Heart right ventricle (tissue), 16 donors: ENCODE measurements at regions of chr1 and their contacts with region 1.

Region 1: DNA sequence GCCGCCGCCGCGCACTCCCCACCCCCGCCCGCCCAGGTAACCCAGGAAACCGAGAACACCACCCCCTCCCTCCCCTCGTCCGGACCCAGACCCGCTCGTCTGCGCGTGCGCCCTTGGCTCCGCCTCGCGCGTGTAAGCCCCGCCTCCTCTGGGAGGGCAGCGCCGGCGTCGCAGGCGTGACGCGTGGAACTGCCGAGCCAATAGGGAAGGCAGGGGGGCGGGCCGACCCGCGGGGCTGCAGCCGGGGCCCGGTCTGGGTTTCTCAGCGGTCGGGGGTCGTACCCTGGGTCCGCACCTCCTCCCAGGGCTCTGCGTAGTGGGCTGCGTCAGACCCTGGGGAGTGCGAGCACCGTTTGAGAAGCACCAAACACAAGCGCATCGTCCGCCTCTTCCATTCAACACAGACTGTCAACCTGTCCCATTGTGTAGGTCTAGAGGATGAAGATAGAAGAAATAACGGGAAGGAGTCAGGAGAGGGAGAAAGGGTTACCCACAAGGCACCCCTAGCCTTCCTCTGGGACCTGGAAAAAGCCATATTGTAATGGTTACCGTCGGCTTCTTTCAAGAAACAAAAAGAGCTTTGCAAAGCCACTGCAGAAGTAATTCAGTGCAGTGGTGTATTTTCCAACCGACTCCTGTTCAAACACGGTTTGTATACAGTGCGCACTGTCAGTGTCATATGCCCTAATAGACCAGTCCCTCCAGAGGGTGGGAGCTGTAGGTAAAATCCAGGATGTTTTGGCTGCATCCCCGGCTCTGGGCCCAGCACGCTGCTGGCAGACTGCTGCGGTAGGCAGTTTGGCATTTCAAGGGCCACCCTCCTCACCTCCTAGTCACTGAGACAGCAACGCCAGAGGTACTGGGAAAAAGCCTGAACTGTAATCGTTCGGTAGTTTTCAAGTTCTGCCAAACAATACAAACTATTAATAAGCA is 473 bp upstream of the LYST start:
- DNase-seq: peak; percentile 94 to 97
- ATAC-seq: peak; percentile 97 to 99 (median 98)
- H3K4me3 ChIP-seq: peak overlapping the region; percentile 71 to 99 (median 96)
- H3K27ac ChIP-seq: peak overlapping the region; percentile 89 to 97 (median 94)
- H3K4me1 ChIP-seq: peaks cover 0 to 48% (median 25%) of the 10 kb centered on the region in 9 donors
- H3K27me3 ChIP-seq: no peaks in the 10 kb centered on the region
- CTCF ChIP-seq: no peak

Region 2: DNA sequence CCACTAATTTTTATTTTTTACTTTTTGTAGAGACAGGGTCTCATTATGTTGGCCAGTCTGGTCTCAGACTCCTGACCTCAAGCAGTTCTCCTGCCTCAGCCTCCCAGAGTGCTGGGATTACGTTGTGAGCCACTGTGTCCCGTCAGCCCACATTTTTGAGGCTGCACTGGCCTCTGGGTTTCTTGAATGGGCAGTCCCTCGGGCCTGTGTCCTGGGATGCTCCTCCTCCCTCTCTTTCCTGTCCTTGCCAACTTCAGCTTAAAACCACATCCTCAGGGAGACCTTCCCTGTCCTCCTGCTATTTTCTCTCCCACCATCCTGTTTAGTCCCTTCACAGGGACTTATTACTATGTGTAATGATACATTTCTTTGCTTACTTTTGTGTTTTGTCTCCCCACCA is 30.9 kb after region 1 on chr1:
- intact Hi-C with region 1: no loop called
- DNase-seq: no peak
- ATAC-seq: no peak
- H3K4me3 ChIP-seq: no peak overlapping the region
- H3K27ac ChIP-seq: no peak overlapping the region
- H3K4me1 ChIP-seq: peaks cover 0 to 34% (median 0%) of the 10 kb centered on the region in 9 donors
- H3K27me3 ChIP-seq: no peaks in the 10 kb centered on the region
- CTCF ChIP-seq: no peak

Region 3: DNA sequence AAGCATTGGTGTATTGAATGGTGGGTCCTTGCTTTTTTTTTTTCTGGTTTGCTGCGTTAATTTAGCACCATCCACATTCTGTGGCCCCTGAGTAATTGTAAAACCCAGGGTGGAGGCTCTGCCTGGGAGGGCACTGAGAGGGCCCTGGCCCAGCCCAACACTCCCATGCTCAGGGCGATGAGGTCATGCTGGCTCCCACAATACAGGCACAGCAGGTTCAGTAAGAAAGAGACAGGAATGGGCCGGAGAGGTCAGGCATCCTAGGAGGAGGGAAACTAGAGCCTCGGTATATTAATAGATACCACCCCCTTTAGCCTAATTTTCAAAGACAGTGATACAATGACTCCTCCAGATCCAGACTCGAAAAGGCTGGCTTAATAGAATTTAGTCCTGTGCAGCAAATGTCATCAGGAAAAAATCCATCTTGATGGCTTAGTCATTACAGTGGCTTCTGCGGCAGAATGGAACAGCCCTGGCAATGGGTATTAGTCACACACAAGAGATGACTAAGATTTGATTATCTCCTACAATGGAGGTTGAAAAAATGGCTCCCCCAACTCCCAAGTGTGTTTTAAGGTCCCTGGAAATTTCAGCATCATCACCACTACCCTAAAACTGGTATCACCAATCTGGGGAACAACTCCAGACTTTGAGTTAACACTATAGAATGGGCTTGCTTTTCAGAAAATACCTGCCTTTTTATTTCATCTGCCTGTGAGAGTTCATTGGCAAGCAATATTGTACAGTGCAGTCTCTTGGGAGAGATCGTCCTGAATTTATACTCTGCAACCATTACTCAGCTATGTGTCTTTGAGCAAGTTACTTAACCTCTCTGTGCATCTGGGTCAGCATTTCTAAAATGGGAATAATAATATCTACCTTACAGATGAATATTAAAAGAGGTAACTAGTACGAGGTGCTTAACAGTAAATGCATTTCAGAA is 43.4 kb after region 1 on chr1:
- intact Hi-C with region 1: loop called in 2 of 10 experiments (anchors 5 to 10 kb)
- DNase-seq: no peak
- ATAC-seq: peak; percentile 23 to 93 (median 57)
- H3K4me3 ChIP-seq: no peak overlapping the region
- H3K27ac ChIP-seq: peak overlapping the region in 3 of 10 donors; percentile 31 to 61 (median 34)
- H3K4me1 ChIP-seq: peaks cover 0 to 24% (median 0%) of the 10 kb centered on the region in 9 donors
- H3K27me3 ChIP-seq: no peaks in the 10 kb centered on the region
- CTCF ChIP-seq: no peak

Region 4: DNA sequence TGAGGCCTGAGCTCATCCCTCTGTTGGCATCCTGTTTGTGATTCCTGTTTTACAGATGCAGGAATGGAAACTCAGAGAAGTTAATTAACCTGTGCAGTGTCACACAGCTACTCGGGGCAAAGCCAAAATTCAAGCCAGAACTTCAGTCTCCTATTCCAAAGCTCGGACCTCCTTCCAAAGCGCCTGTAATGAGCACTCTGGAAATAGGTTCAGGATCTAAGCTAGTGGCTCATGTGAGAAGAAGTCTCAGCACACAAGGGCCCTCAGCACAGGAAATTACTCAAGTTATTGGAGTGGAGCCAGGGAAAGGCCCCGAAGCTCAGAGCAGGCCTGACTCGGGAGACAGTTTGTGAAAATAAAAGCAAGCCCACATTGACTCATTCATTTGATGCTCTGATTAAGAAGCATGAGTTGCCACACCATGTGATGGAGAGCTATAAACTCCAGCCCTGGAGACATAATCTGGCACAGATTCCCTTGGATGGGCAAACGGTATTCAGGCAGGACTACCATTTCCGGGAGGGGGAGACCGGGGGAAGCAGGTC is 50.2 kb after region 1 on chr1:
- intact Hi-C with region 1: loop called in 2 of 10 experiments (anchors 5 to 10 kb)
- DNase-seq: peak in 1 of 2 donors; percentile 78
- ATAC-seq: peak; percentile 88 to 96 (median 95)
- H3K4me3 ChIP-seq: no peak overlapping the region
- H3K27ac ChIP-seq: peak overlapping the region; percentile 3 to 81 (median 44)
- H3K4me1 ChIP-seq: peaks cover 2 to 50% (median 15%) of the 10 kb centered on the region in 9 donors
- H3K27me3 ChIP-seq: no peaks in the 10 kb centered on the region
- CTCF ChIP-seq: no peak

Region 5: DNA sequence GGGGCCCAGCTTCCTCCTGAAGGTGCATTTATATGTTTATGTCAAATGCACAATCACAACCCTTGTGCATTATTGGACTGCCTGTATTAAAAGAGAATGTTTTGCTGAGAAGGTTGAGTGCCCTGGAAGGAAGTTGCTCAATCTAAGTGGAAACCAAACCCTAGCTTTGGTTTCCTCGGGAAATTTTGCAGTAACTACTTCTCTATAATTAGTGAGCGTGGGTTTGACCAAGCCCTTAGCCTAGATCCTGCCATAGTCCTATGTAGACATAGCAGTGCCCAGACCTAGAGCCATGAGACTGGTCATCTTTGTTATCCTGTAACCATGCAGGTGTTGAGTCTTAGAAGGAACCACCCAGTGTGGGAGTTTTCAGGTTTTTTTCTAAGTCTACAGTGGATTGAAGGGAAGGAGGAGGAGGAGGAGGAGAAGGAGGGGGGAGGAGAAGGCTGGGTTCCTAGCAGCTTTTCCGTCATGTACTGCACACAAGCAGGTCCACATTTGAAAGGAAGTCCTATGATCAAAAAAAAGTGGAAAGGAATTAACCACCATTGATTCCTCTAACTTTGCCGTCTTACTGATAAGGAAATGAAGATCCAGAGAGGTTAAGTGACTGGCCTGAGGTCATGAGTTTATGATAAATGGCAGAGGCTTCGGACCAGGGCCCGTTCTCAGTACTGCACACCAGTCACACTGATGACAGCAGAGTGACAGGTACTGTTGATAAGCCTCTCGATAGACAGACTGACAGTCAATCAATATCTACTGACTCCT is 71.7 kb after region 1 on chr1:
- intact Hi-C with region 1: loop called in 1 of 10 experiments (anchors 5 kb)
- DNase-seq: no peak
- ATAC-seq: peak; percentile 42 to 85 (median 77)
- H3K4me3 ChIP-seq: no peak overlapping the region
- H3K27ac ChIP-seq: peak overlapping the region in 6 of 10 donors; percentile 9 to 75 (median 36)
- H3K4me1 ChIP-seq: peaks cover 0 to 79% (median 8%) of the 10 kb centered on the region in 9 donors
- H3K27me3 ChIP-seq: no peaks in the 10 kb centered on the region
- CTCF ChIP-seq: no peak

Region 6: GRCh38 chr1:235954306-235955283 is 87.4 kb after region 1 on chr1:
- intact Hi-C with region 1: loop called in 1 of 10 experiments (anchors 10 kb)
- DNase-seq: peak in 1 of 2 donors; percentile 25
- ATAC-seq: peak in 7 of 8 donors; percentile 28 to 57 (median 48)
- H3K4me3 ChIP-seq: no peak overlapping the region
- H3K27ac ChIP-seq: peak overlapping the region in 1 of 10 donors; percentile 50
- H3K4me1 ChIP-seq: peaks cover 0 to 37% (median 0%) of the 10 kb centered on the region in 9 donors
- H3K27me3 ChIP-seq: no peaks in the 10 kb centered on the region
- CTCF ChIP-seq: no peak

Region 7: DNA sequence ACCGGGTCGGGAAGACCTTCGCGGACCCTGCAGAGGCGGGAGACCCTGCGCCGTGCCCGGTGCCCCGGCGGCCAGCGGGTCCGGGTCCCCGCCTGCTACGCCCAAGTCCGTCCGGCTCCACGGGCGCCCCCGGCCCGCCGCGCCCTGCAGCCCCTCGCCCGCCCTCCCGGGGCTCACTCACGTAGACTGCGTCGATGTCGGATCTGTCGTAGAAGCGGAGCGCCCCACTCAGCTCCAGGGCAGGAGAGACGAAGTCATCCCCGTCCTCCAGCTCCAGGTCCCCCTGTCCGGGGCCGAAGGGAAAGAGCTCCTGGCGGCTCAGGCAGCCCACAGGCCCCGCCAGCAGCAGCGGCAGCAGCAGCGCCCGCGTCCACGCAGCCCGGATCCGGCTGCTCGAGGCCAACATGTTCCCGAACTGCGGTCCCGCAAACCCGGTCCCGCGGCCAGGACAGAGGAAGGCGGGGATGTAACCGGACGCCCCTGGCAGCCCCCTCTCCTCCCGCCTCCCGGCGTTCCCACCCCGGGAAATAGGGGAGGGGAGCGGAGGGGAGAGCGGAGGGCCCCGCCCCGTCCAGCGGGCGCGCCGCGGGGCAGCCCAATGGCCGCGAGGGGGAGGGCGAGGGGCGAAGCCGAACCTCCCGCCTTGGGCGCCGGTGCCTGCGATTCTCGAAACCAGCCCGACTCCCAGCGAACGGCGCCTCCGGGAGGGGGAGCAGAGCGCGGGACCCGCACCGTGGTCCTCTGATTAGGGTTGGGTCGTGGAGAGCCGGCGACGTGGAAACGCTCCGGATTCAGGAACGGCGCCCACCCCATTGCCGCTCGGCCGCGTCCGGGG is 197.7 kb after region 1 on chr1 and contains the start of gene NID1:
- intact Hi-C with region 1: loop called in 1 of 10 experiments (anchors 5 kb)
- DNase-seq: peak; percentile 89 to 90
- ATAC-seq: peak; percentile 81 to 92 (median 86)
- H3K4me3 ChIP-seq: peak within 1 kb of the TSS; percentile 61 to 98 (median 88)
- H3K27ac ChIP-seq: peak within 1 kb of the TSS; percentile 89 to 100 (median 98)
- H3K4me1 ChIP-seq: peaks cover 4 to 75% (median 55%) of the 10 kb centered on the region in 9 donors
- H3K27me3 ChIP-seq: peaks cover 0 to 33% (median 0%) of the 10 kb centered on the region in 7 donors
- CTCF ChIP-seq: peak; percentile 13 to 72 (median 54)
- total RNA-seq, gene NID1: 33.5 to 120 (median 44.4) TPM